ENCODE measurements at regions of chr3 and their contacts with region 1.

Region 1: GRCh38 chr3:16290007-16290826 is 25.2 kb downstream of the OXNAD1 start:
- DNase-seq: no peak
- H3K4me3 ChIP-seq: no peak overlapping the region
- CTCF ChIP-seq: peak; percentile 62

Region 2: DNA sequence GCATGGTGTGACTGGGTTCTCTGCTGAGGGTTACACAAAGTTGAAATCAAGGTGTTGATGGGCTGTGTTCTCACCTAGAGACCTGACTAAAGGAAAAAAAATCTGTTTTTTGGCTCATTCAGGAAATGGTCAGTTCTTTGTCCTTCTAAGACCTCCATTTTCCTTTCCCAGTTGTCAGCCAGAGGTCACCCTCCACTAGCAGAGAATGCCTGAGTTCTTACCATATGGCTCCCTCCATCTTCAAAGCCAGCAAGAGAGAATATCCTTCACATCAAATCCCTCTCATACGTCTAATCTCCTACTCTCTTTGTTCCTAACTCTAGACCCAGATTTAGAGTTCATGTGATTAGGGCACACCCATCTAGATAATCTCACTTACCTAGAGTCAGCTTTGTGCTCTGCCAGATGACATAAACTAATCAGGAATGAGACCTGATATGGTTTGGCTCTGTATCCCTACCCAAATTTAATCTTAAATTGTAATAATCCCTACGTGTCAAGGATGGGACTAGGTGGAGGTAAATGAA is 511.8 kb before region 1 on chr3:
- CTCF ChIA-PET with region 1: no interaction called
- POLR2A ChIA-PET with region 1: no interaction called
- DNase-seq: no peak
- H3K4me3 ChIP-seq: no peak overlapping the region
- CTCF ChIP-seq: no peak

Region 3: DNA sequence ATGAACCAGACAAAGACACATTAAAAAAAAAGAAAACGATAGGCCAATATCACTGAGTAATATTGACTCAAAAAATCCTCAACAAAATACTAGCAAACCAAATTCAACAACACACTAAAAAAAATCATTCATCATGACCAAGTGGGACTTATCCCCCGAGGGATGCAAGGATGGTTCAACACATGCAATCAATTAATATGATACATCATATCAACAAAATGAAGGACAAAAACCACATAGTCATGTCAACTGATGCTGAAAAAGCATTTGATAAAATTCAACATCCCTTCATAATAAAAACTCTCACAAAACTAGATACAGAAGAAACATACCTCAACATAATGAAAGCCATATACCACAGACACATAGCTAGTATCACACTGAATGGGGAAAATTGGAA is 450.6 kb before region 1 on chr3:
- CTCF ChIA-PET with region 1: no interaction called
- POLR2A ChIA-PET with region 1: no interaction called
- DNase-seq: no peak
- H3K4me3 ChIP-seq: no peak overlapping the region
- CTCF ChIP-seq: no peak

Region 4: GRCh38 chr3:16300881-16301359 is 10.7 kb after region 1 on chr3:
- CTCF ChIA-PET with region 1: interaction called, 16 read pairs
- POLR2A ChIA-PET with region 1: no interaction called
- DNase-seq: no peak
- H3K4me3 ChIP-seq: no peak overlapping the region
- CTCF ChIP-seq: no peak

Region 5: GRCh38 chr3:16511681-16512434 is 221.6 kb after region 1 on chr3:
- CTCF ChIA-PET with region 1: interaction called, 166 read pairs
- POLR2A ChIA-PET with region 1: interaction called, 3 read pairs
- DNase-seq: peak; percentile 28
- H3K4me3 ChIP-seq: peak overlapping the region; percentile 92
- CTCF ChIP-seq: no peak

Region 6: GRCh38 chr3:16529264-16529663 is 239.0 kb after region 1 on chr3:
- CTCF ChIA-PET with region 1: interaction called, 31 read pairs
- POLR2A ChIA-PET with region 1: no interaction called
- DNase-seq: no peak
- H3K4me3 ChIP-seq: no peak overlapping the region
- CTCF ChIP-seq: no peak

Region 7: GRCh38 chr3:16550676-16551341 is 260.6 kb after region 1 on chr3:
- CTCF ChIA-PET with region 1: interaction called, 180 read pairs
- POLR2A ChIA-PET with region 1: no interaction called
- DNase-seq: peak; percentile 57
- H3K4me3 ChIP-seq: no peak overlapping the region; the same call in 1 of the 2 replicates
- CTCF ChIP-seq: peak; percentile 84

Measured in AG04449 (cell line).